ENCODE measurements at regions of chr3 and their contacts with region 1.

Region 1: GRCh38 chr3:184135149-184135910 is at the start of gene EIF2B5:
- DNase-seq: peak; percentile 89 to 92
- H3K4me3 ChIP-seq: peak within 1 kb of the TSS; percentile 78
- H3K4me3 Mint-ChIP-seq: peak within 1 kb of the TSS; percentile 98
- H3K27ac Mint-ChIP-seq: peak within 1 kb of the TSS; percentile 93
- H3K4me1 ChIP-seq: peaks cover 9% of the 10 kb centered on the region; the same call in 1 of the 2 replicates
- H3K4me1 Mint-ChIP-seq: peaks cover 7% of the 10 kb centered on the region
- H3K27me3 ChIP-seq: no peaks in the 10 kb centered on the region
- H3K27me3 Mint-ChIP-seq: no peaks in the 10 kb centered on the region
- CTCF ChIP-seq: peak in 1 of 2 experiments; percentile 59
- total RNA-seq, gene EIF2B5: 43.8 and 52.9 TPM in 2 replicates

Region 2: DNA sequence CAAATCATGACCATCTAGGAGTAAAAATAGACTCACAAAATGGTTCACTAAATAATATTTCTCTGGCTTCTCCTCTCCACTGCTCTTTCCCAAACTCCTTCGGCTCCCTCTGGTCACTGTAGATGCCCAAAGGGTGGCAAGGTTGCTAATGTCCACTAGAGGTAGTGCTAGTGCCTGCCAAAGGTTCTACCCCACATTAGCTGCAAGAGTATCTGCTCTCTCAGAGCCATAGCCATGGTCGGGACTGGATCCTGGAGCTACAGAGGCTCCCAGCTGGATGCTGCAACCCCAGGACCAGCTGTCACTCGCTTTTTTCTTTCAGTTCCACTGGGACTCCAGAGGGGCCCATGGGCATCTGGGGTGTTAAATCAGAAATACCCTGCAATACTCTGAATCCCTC is 95.3 kb before region 1 on chr3:
- CTCF ChIA-PET with region 1: interaction called, 3 read pairs
- POLR2A ChIA-PET with region 1: no interaction called
- intact Hi-C with region 1: loop called (anchors 1 kb)
- DNase-seq: peak; percentile 49 to 55
- H3K4me3 ChIP-seq: no peak overlapping the region
- H3K4me3 Mint-ChIP-seq: no peak overlapping the region
- H3K27ac Mint-ChIP-seq: no peak overlapping the region
- H3K4me1 ChIP-seq: no peaks in the 10 kb centered on the region
- H3K4me1 Mint-ChIP-seq: no peaks in the 10 kb centered on the region
- H3K27me3 ChIP-seq: no peaks in the 10 kb centered on the region
- H3K27me3 Mint-ChIP-seq: peaks cover 2% of the 10 kb centered on the region
- CTCF ChIP-seq: peak in 1 of 2 experiments; percentile 46

Region 3: DNA sequence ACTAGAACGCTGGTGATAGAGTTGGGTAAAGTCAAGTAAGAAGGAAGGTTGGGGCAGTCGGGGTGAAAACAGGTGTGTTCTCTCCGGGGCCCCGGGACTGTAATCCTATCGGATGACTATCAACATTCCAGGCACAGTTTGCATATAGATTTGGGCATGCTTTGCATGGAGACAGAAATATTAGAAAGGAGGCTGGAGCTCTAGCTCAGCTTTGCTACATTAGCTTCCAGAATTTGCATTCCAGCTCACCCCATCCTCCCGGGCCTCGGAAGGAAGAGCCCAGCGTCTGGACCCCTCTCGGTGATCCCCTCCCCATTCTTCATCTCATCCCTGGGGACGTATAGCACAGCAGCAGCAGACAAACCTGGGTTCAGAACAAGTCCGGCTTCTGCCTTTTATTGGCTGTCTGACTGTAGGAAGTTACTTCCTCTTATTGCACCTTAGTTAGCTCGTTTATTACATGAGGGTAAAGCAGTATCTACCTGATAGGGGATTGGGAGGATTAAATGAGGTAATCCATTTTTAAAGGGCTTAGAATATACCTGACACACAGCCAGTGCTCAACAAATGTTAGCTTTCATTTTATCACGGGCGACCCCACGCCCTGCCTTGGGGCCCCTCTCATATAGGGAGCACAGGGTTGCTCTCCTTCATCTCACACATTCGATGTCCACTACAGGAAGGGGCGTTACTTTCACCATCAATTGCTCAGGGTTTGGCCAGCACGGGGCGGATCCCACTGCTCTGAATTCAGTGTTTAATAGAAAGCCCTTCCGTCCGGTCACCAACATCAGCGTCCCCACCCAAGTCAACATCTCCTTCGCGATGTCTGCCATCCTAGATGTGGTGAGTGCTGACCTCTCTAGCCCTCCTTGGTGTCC is 35.3 kb before region 1 on chr3:
- CTCF ChIA-PET with region 1: no interaction called
- POLR2A ChIA-PET with region 1: interaction called, 10 read pairs
- intact Hi-C with region 1: no loop called
- DNase-seq: no peak
- H3K4me3 ChIP-seq: no peak overlapping the region
- H3K4me3 Mint-ChIP-seq: no peak overlapping the region
- H3K27ac Mint-ChIP-seq: no peak overlapping the region
- H3K4me1 ChIP-seq: no peaks in the 10 kb centered on the region
- H3K4me1 Mint-ChIP-seq: no peaks in the 10 kb centered on the region
- H3K27me3 ChIP-seq: no peaks in the 10 kb centered on the region
- H3K27me3 Mint-ChIP-seq: peaks cover 3% of the 10 kb centered on the region
- CTCF ChIP-seq: no peak

Region 4: DNA sequence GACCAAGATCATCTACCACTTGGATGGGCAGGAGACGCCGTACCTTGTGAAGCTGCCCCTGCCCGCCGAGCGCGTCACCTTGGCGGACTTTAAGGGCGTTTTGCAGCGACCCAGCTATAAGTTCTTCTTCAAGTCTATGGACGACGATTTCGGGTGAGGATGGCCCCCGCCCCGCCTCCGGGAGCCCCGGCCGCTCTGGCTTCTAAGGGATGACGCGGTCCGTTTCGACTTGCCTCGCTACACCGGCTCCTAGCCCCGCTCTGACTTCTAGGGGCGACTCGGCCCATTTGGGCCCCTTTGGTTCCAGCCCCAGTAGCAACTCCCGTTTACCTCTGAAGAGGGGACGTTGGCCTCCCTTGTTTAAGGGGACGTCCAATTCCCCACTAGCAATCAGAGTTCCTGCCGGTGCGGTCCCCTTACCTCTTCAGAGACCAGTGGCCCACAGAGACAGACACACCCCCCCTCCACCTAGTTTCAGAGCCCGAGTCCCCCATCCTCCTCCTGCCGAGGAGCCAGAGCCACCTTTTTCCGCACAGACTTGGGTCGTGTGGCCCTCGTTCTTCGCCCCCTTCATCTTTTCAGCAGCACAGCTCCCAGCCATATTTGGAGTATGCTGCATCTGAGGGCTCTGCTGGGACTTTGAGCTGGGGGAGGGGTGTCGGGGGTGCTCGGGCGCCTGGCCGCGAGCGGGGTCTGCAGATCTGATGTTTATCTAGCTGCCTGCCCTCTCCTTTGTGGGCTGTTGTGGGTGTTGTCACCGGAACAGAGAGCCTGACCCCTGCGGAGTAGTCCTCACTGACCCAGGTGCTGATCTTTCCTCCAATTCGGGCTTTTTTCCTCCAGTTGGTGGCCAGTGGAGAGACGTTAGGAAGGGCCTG is 20.6 kb after region 1 on chr3:
- CTCF ChIA-PET with region 1: no interaction called
- POLR2A ChIA-PET with region 1: interaction called, 3 read pairs
- intact Hi-C with region 1: loop called (anchors 2 kb)
- DNase-seq: peak in 1 of 2 experiments; percentile 53
- H3K4me3 ChIP-seq: peak overlapping the region; percentile 81
- H3K4me3 Mint-ChIP-seq: peak overlapping the region; percentile 98
- H3K27ac Mint-ChIP-seq: peak overlapping the region; percentile 87
- H3K4me1 ChIP-seq: peaks cover 7% of the 10 kb centered on the region; the same call in 1 of the 2 replicates
- H3K4me1 Mint-ChIP-seq: peaks cover 7% of the 10 kb centered on the region
- H3K27me3 ChIP-seq: no peaks in the 10 kb centered on the region
- H3K27me3 Mint-ChIP-seq: no peaks in the 10 kb centered on the region
- CTCF ChIP-seq: no peak

Measured in Caco-2 (cell line).